IMR-90 (cell line): ENCODE measurements at regions of chr9 and their contacts with region 1.

Region 1: DNA sequence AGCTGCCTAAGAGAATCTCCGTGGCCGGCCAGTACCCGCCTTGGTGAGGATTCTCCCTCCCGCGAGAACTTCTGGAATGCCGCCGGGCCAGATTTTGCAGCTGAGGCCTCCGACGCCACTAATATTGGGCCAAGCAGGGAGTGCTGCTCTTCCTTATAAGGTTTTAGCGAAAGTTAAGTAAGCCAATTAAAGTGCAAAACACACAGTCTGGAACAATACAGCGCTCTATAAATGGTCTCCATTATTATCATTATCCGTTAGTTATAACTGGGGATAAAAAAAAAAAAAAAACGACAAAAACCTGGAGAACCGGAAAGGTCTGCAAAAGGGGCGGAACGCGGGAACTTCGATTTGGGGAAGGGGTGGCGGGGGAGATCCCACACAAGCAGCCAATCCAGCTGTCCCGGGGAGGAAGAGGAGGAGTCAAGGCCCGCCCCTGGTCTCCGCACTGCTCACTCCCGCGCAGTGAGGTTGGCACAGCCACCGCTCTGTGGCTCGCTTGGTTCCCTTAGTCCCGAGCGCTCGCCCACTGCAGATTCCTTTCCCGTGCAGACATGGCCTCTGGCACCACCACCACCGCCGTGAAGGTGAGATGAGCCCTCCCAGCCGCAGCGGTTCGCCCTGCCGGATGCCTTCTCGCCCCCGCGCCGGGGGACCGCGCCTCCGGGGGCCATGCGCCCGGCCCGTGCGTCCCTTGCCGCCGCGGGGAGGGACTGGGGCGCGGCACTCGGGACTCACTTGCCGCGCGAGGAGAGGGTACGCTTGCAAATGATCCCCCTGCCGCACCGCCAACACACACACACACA is at the start of gene MTAP:
- DNase-seq: peak; percentile 93
- ATAC-seq: peak; percentile 94
- H3K4me3 ChIP-seq: peak within 1 kb of the TSS; percentile 68
- H3K27ac ChIP-seq: peak within 1 kb of the TSS; percentile 83
- H3K4me1 ChIP-seq: peaks cover 7% of the 10 kb centered on the region; the same call in 1 of the 2 replicates
- H3K27me3 ChIP-seq: no peaks in the 10 kb centered on the region
- CTCF ChIP-seq: no peak
- POLR2A ChIP-seq: 0 out of 2 replicates have a peak, but pooled peaks have one; percentile 34
- RAD21 ChIP-seq: no peak
- total RNA-seq, gene MTAP: 33.6 and 50.9 TPM in 2 replicates

Region 2: DNA sequence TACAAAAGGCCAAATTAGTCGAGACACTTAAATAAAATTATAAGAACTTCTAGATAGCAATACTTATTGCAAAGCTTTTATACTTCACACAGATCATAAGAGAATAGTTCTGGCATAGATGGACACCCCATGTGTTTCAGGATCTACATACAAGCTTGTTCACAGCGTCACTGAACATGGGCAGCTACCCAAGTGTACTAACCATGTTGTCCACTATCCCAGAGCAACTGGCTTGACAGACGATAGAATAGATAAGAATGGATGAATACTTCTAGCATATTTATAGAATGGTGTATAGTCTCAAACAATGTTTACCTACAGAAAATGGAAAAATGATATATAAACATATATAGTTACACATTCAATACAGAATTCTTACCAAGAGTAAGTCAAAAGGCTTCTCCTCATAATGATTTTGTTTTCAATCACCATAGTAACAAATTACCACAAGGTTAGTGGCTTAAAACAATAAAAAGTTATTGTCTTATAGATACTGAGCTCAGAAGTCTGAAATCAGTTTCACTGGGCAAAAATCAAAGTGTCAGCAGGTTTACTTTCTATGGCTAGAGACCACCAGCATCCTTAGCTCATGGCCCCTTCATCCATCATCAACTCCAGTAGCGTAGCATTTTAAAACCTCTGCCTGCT is 1090.9 kb after region 1 on chr9:
- CTCF ChIA-PET with region 1: no interaction called
- POLR2A ChIA-PET with region 1: no interaction called
- dilution Hi-C with region 1: no loop called
- in situ Hi-C with region 1: no loop called
- intact Hi-C with region 1: loop called (anchors 5 kb)
- DNase-seq: no peak
- ATAC-seq: no peak
- H3K4me3 ChIP-seq: no peak overlapping the region
- H3K27ac ChIP-seq: no peak overlapping the region
- H3K4me1 ChIP-seq: no peaks in the 10 kb centered on the region
- H3K27me3 ChIP-seq: no peaks in the 10 kb centered on the region
- CTCF ChIP-seq: no peak
- POLR2A ChIP-seq: no peak
- RAD21 ChIP-seq: no peak